Cardiac septum (tissue), 1 donor: ENCODE measurements at regions of chr6 and their contacts with region 1.

Region 1: DNA sequence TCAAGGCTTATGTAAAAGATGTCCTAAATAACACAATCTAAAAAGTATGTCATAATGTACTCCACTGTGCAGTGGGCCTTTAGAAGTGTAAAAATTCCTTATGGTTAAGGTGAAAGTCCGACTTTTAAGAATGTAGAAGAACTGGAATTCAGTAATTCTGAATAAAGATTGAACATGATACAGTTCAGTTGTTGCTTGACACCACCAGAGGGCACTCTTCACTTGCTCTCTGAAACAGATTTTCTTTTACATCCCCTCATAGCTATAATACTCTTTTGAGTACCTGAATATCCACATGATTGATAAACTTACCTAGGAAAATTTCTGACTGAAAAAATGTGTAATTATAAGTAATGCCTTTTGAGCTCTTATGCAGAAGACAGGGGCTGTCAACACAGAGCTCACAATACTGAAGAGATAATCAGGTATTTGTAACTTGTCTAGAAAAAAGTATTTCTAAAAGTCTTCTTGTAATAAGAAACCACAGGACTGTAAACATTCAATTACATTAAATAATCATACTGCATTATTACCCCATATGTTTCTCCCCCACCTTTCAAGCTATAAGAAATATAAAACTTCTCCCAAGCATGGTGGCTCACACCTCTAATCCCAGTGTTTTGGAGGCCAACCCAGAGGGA is 92.1 kb downstream of the POPDC3 start:
- DNase-seq: no peak

Region 2: DNA sequence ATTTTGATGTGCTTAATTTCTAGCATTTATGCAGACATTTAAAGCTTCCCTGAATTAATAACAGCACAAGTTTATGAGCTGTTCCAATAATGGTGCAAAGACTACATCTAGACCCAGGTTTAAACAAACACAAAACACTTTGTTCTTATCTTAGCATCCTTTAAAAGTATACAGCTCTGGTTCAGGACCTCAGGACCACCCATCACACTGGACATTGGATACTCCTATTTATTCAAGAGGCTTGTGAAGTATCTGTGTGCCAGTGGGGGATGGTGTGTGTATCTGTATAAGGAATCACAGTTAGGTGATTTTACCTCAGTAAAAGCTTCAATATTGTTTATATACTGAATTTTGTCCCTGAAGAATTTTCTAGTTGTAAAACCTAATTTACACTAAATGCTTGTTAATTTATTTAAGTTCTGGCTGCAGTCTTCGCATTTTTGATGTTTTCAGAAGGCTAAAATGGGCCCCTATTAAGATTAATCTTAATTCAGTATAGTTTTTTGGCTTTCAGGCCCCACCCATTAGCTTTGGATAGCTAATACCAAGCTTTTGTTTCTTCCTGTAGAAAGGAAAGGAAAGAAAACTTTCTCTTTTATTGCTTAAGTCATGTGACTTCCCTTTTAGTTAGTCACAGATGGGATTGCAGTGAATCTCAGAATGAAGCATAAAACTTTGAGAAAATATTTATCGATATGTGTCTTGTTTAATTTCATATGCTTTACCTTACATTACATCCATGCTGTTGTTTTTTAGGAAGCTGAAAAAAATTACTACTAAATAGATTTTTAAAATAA is 117.7 kb before region 1 on chr6:
- intact Hi-C with region 1: no loop called
- DNase-seq: no peak

Region 3: GRCh38 chr6:105424175-105424783 is 336.6 kb after region 1 on chr6:
- intact Hi-C with region 1: loop called (anchors 1 kb)
- DNase-seq: no peak